ENCODE measurements at regions of chr22 and their contacts with region 1.

Region 1: DNA sequence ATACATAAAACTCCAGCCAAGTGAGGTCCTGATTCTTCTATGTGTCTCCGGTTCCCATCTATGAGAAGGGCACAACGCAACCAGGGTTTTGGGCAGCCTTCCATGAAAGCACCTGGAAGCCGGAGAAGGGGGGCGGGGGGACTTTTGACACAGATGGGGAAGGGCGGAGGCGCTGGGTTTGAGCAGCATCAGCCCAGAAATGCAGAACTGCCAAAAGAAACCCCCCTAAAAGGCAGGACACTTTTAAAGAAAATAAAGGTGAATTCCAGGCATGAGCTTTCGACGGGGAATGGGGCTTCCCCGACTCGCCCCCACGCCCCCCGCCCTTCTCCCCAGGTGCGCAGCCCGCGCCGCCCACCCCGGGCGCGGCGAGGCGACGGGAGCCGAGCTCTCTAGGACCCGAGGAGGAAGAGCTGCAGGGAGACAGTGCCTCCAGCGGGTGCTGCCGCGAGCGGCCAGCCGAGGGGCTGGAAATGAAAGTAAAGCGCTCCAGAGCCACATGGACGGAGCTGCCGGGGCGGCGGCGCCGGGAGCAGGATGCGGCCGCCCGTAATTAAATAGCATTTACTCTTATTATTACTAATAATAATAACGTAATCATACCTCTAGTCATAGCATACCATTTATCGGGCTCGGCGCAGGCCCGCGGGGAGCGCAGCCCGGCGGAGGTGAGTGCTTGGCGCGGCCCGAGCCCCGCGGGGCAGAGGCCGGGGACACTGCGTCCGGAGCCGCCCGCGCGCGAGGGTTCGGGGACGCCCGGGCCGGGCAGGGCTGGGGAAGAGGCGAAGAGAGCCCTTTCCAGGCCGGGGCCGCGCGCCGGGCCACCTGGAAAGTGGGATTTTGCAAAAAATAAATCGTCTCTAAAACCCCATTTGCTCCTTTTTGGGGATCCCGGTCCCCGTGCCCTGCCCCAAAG is at the start of gene ZC3H7B:
- DNase-seq: peak; percentile 80
- H3K4me3 ChIP-seq: peak within 1 kb of the TSS; percentile 63 to 99 (median 81)
- H3K27ac ChIP-seq: peak within 1 kb of the TSS; percentile 70
- H3K4me1 ChIP-seq: peaks cover 24% of the 10 kb centered on the region
- H3K27me3 ChIP-seq: no peaks in the 10 kb centered on the region
- CTCF ChIP-seq: peak; percentile 39 to 72
- POLR2A ChIP-seq: peak; percentile 85
- total RNA-seq, gene ZC3H7B: 89.6 and 95.9 TPM in 2 replicates

Region 2: DNA sequence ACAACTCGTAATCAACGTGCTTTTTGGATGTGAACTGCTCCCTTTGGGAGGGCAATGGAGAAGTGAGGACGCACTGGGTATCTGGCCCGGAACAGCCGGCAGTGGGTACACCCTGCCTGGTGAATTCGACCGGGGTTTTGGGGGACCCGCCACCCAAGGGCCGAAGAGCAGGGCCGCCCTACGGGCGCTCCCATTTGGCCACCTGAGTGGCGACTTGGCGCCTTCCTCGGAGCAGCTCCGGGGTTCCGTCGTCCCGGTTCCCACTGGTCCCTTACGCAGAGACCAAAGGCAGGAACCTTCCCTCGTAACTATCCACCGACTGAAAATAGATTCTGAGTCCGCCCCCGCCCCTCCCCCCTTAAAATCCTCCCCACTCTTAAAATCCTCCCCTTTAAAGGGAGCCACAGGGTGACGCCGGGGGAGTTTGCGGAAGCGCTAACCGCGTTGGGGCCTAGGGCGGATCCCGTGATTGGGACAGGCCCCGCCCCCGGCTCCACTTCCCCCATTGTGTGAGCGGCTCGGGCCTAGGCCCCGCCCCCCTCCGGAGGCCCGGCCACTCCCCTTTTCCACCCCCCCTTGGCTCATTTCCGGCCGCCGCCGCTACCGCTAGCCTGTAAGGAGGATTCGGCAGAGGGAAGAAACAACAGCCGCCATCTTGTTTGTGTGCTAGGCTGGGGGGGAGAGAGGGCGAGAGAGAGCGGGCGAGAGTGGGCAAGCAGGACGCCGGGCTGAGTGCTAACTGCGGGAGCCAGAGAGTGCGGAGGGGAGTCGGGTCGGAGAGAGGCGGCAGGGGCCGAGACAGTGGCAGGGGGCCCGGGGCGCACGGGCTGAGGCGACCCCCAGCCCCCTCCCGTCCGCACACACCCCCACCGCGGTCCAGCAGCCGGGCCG is 210.0 kb before region 1 on chr22:
- CTCF ChIA-PET with region 1: no interaction called
- POLR2A ChIA-PET with region 1: no interaction called
- dilution Hi-C with region 1: no loop called
- intact Hi-C with region 1: loop called (anchors 5 kb)
- DNase-seq: peak; percentile 99
- H3K4me3 ChIP-seq: peak overlapping the region; percentile 99 to 100 (median 100)
- H3K27ac ChIP-seq: peak overlapping the region; percentile 98
- H3K4me1 ChIP-seq: peaks cover 25% of the 10 kb centered on the region
- H3K27me3 ChIP-seq: no peaks in the 10 kb centered on the region
- CTCF ChIP-seq: no peak
- POLR2A ChIP-seq: peak; percentile 74

Region 3: DNA sequence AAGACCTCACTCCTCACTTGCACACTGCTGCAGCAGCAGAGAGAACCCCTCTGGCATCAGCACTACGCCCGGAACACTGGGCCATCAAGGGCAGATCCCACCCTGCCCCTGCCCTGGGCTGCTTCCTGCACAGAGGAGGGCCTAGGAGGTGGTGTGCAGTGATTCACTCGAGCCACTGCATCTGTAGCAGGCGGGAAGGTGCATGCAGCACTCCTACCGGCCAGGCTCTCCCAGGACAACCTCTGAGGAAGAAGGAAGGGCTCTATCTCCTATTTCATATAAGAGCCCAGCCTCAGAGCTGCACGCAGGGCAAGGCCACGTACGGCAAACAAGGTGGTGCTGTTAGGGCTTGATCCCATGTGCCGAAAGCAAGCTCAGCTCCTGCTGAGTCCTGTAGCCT is 29.6 kb before region 1 on chr22:
- CTCF ChIA-PET with region 1: interaction called, 10 read pairs
- POLR2A ChIA-PET with region 1: no interaction called
- dilution Hi-C with region 1: no loop called
- intact Hi-C with region 1: no loop called
- DNase-seq: no peak
- H3K4me3 ChIP-seq: no peak overlapping the region
- H3K27ac ChIP-seq: no peak overlapping the region
- H3K4me1 ChIP-seq: no peaks in the 10 kb centered on the region
- H3K27me3 ChIP-seq: no peaks in the 10 kb centered on the region
- CTCF ChIP-seq: no peak
- POLR2A ChIP-seq: no peak

Region 4: GRCh38 chr22:41280066-41280465 is 21.3 kb before region 1 on chr22:
- CTCF ChIA-PET with region 1: interaction called, 53 read pairs
- POLR2A ChIA-PET with region 1: no interaction called
- dilution Hi-C with region 1: no loop called
- intact Hi-C with region 1: no loop called
- DNase-seq: no peak
- H3K4me3 ChIP-seq: no peak overlapping the region
- H3K27ac ChIP-seq: no peak overlapping the region
- H3K4me1 ChIP-seq: peaks cover 13% of the 10 kb centered on the region
- H3K27me3 ChIP-seq: no peaks in the 10 kb centered on the region
- CTCF ChIP-seq: no peak
- POLR2A ChIP-seq: no peak

Region 5: GRCh38 chr22:41285820-41286638 is 15.3 kb before region 1 on chr22 and contains the start of gene RANGAP1:
- CTCF ChIA-PET with region 1: interaction called, 53 read pairs
- POLR2A ChIA-PET with region 1: interaction called, 6 read pairs
- dilution Hi-C with region 1: no loop called
- intact Hi-C with region 1: loop called (anchors 1 kb)
- DNase-seq: peak; percentile 99
- H3K4me3 ChIP-seq: peak within 1 kb of the TSS; percentile 51 to 88 (median 55)
- H3K27ac ChIP-seq: peak within 1 kb of the TSS; percentile 71
- H3K4me1 ChIP-seq: peaks cover 57% of the 10 kb centered on the region
- H3K27me3 ChIP-seq: no peaks in the 10 kb centered on the region
- CTCF ChIP-seq: peak in 1 of 2 donors; percentile 28
- POLR2A ChIP-seq: peak; percentile 72
- total RNA-seq, gene RANGAP1: 154 and 169 TPM in 2 replicates

Measured in endothelial cell of umbilical vein (primary cell).